Activated CD4-positive, alpha-beta memory T cell treated with anti-CD3 and anti-CD28 coated beads for 36 hours (primary cell): ENCODE measurements at regions of chrX and their contacts with region 1.

Region 1: DNA sequence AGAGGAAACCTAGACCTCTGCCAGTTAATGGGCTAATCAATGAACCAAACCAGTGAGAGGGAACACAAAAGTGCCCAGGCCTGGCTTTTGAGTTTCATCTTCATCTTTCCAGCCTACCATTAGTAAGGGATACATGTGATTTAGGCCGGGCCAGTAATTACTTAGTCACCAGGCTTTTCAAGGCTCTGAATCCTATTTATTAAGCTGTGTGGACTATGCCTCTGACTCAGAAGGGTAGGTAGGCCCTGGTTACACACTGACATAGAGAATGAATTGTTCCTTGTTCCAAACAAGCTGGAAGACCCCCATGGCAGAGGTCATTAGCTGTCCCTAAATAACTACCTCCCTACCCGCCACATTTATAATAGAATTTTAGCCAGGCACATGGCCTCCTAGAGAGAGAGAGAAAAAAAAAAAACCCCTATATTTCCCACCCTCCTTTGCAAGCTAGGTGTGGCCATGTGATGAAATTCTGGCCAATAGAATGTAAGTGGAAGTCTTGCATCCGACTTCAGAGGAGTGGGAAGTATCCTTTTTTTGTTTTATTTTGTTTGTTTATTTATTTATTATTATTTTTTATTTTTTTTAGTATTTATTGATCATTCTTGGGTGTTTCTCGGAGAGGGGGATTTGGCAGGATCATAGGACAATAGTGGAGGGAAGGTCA is 112.3 kb upstream of the BCOR start:
- DNase-seq: no peak
- H3K4me3 Mint-ChIP-seq: no peak overlapping the region
- H3K27ac Mint-ChIP-seq: no peak overlapping the region
- H3K4me1 Mint-ChIP-seq: peaks cover 5% of the 10 kb centered on the region
- H3K27me3 Mint-ChIP-seq: no peaks in the 10 kb centered on the region

Region 2: DNA sequence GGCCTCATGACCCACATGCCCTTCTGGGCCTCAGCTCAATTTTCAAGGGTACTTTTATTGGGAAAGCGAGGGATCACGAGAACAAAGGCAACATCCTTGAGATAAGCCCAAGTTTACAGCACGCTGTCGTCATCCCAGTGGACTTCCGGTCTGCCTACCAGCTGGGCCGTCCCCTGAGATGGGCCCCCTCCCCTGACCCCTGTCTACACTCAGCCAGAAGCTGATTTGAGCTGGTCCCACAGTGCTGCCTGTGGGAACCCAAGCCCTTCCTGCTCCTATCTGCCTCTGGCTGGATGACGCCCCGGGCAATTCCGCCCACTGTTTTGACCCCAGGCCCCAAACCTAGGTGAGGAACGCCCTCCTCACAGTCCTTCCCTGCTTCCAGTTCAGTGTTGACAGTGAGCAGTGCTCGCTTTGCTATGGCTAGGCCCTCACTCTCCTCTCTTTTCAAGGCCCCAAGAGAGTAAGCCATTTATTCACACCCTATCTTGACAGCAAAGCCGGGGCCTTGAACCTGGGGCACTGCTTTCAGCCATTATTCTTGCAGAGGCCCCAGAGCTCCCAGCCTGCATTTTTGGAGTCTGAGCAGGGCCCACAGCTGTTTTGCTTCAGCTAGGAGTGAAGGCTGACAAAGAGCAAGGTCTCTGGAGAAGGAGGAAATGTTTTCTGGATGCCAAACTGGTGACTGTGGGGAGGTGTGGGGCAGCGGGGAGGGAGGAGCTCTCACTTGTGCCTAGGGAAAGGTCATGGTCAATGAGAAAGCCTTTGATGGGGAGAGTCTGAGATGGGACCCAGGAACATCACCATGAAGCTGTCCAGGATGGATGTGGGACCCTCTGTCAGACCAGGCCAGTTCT is 52.3 kb after region 1 on chrX:
- CTCF ChIA-PET with region 1: no interaction called
- POLR2A ChIA-PET with region 1: no interaction called
- intact Hi-C with region 1: no loop called
- DNase-seq: no peak
- H3K4me3 Mint-ChIP-seq: no peak overlapping the region
- H3K27ac Mint-ChIP-seq: no peak overlapping the region
- H3K4me1 Mint-ChIP-seq: no peaks in the 10 kb centered on the region
- H3K27me3 Mint-ChIP-seq: no peaks in the 10 kb centered on the region

Region 3: DNA sequence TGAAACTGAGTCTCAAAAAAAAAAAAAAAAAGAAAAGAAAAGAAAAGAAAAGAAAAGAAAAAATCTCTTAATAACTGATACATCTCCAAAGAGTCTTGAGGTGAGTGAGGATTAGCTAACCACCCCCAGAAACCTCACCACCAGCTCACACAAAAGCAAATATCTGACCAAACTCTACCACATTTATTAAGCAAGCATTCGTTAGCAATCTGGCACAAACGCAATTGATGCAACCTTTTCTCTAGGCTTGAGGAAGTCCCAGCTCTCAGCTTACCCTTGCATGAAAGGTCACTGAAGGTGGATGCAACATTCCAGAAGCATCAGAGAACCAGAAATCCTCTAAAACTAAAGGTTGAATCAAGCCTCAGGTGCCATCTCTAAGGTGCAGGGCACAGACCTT is 119.5 kb after region 1 on chrX:
- CTCF ChIA-PET with region 1: no interaction called
- POLR2A ChIA-PET with region 1: no interaction called
- intact Hi-C with region 1: no loop called
- DNase-seq: no peak
- H3K4me3 Mint-ChIP-seq: no peak overlapping the region
- H3K27ac Mint-ChIP-seq: no peak overlapping the region
- H3K4me1 Mint-ChIP-seq: peaks cover 6% of the 10 kb centered on the region
- H3K27me3 Mint-ChIP-seq: no peaks in the 10 kb centered on the region

Region 4: GRCh38 chrX:40358994-40359393 is 148.9 kb after region 1 on chrX:
- CTCF ChIA-PET with region 1: no interaction called
- POLR2A ChIA-PET with region 1: no interaction called
- intact Hi-C with region 1: loop called (anchors 10 kb)
- DNase-seq: no peak
- H3K4me3 Mint-ChIP-seq: no peak overlapping the region
- H3K27ac Mint-ChIP-seq: no peak overlapping the region
- H3K4me1 Mint-ChIP-seq: no peaks in the 10 kb centered on the region
- H3K27me3 Mint-ChIP-seq: no peaks in the 10 kb centered on the region

Region 5: GRCh38 chrX:40380655-40381488 is 170.8 kb after region 1 on chrX:
- CTCF ChIA-PET with region 1: no interaction called
- POLR2A ChIA-PET with region 1: no interaction called
- intact Hi-C with region 1: no loop called
- DNase-seq: no peak
- H3K4me3 Mint-ChIP-seq: no peak overlapping the region
- H3K27ac Mint-ChIP-seq: no peak overlapping the region
- H3K4me1 Mint-ChIP-seq: no peaks in the 10 kb centered on the region
- H3K27me3 Mint-ChIP-seq: no peaks in the 10 kb centered on the region

Region 6: GRCh38 chrX:40671126-40671525 is 461.0 kb after region 1 on chrX:
- CTCF ChIA-PET with region 1: no interaction called
- POLR2A ChIA-PET with region 1: no interaction called
- intact Hi-C with region 1: no loop called
- DNase-seq: no peak
- H3K4me3 Mint-ChIP-seq: no peak overlapping the region
- H3K27ac Mint-ChIP-seq: no peak overlapping the region
- H3K4me1 Mint-ChIP-seq: no peaks in the 10 kb centered on the region
- H3K27me3 Mint-ChIP-seq: no peaks in the 10 kb centered on the region